Activated CD4-positive, alpha-beta memory T cell treated with anti-CD3 and anti-CD28 coated beads for 36 hours (primary cell): ENCODE measurements at regions of chr10 and their contacts with region 1.

Region 1: GRCh38 chr10:132307823-132308587 is at the start of gene STK32C:
- DNase-seq: peak; percentile 93
- H3K4me3 Mint-ChIP-seq: peak within 1 kb of the TSS; percentile 85
- H3K27ac Mint-ChIP-seq: no peak within 1 kb of the TSS
- H3K4me1 Mint-ChIP-seq: peaks cover 11% of the 10 kb centered on the region
- H3K27me3 Mint-ChIP-seq: peaks cover 3% of the 10 kb centered on the region
- total RNA-seq, gene STK32C: 14.8 to 16.1 TPM

Region 2: DNA sequence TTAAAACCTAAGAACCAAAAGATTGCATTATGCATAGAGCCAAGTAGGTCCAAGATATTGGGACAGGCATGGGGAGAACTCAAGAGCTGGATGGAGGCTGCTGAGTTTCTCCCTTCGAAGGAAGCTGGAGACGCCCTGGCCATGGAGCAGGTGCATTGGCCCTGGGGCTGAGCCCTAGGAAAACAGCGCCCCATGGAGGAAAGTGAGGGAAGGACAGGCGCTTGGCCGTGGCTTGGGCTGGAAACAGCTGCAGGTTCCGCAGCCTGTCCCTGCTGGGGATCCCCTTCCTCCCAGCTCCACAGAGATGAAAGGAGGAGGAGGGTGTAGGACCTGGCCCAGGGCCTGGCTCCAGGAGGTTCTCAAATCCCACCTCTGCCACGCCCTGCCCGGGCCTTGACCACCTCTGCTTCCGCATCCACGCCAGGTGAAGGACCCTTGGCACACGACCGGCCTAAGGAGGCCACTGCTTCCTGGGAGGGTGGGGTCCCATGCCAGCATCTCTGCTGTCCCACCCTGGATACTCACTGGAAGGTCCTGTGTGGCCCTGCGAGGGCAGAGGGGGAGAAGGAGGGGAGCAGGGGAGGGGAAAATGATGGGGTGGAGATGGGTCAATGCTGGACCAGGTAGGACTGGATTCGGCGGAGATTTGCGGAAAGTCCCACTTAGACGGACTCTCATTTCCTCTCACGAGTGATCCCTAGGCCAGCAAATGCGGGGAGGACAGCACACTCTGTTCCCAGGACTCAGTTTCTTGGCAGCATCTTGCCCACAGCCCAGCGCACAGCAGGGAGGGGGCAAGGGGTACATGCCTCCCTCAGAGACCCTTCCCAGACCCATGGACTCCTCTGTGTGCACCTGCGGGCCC is 737.9 kb before region 1 on chr10:
- CTCF ChIA-PET with region 1: no interaction called
- POLR2A ChIA-PET with region 1: no interaction called
- intact Hi-C with region 1: no loop called
- DNase-seq: no peak
- H3K4me3 Mint-ChIP-seq: no peak overlapping the region
- H3K27ac Mint-ChIP-seq: no peak overlapping the region
- H3K4me1 Mint-ChIP-seq: no peaks in the 10 kb centered on the region
- H3K27me3 Mint-ChIP-seq: no peaks in the 10 kb centered on the region

Region 3: GRCh38 chr10:132257271-132257670 is 50.7 kb before region 1 on chr10:
- CTCF ChIA-PET with region 1: no interaction called
- POLR2A ChIA-PET with region 1: no interaction called
- intact Hi-C with region 1: loop called (anchors 5 kb)
- DNase-seq: peak; percentile 74
- H3K4me3 Mint-ChIP-seq: no peak overlapping the region
- H3K27ac Mint-ChIP-seq: no peak overlapping the region
- H3K4me1 Mint-ChIP-seq: peaks cover 8% of the 10 kb centered on the region
- H3K27me3 Mint-ChIP-seq: no peaks in the 10 kb centered on the region

Region 4: DNA sequence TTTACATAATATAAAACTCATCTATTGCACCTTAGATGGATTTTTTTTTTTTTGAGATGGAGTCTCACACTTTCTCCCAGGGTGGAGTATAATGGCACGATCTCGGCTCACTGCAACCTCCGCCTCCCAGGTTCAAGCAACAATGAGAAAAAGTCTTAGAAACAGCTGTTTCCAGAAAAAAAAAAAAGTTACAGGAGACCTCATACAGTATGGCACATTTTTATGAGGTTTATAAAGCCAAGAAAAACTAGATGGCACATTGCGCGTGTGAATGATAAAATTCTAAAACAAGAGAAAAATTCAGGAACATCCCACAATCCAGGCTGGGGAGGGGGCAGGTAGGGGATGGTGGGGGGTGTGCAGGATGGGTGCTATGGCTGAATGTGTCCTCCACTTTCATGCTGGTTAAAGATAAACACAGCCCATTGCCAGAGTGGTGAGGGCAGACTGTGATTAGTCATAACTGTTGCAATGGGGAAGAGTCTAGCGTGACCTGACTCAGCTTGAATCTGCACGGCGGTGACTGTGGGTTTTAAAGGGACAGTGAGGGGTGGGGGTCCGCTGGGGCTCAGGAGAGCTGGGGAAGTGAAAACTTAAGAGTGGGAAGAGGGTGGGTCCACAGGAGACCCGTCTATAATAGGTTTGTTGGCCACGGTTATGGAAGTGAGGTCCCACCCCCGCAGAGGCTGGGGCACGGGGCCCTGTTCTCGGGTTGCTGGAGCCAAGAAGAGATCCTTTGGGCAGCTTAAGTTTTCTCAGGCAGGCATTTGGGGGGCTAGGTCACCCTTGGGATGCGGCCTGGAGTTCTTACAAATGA is 12.1 kb after region 1 on chr10:
- CTCF ChIA-PET with region 1: no interaction called
- POLR2A ChIA-PET with region 1: no interaction called
- intact Hi-C with region 1: loop called (anchors 1 kb)
- DNase-seq: peak; percentile 79
- H3K4me3 Mint-ChIP-seq: peak overlapping the region; percentile 1
- H3K27ac Mint-ChIP-seq: peak overlapping the region; percentile 18
- H3K4me1 Mint-ChIP-seq: peaks cover 22% of the 10 kb centered on the region
- H3K27me3 Mint-ChIP-seq: no peaks in the 10 kb centered on the region